Activated T-helper 1 cell treated with anti-CD3 and anti-CD28 coated beads, Interleukin-12 subunit alpha, Interleukin-12 subunit beta, Interleukin-2, Interleukin-4 antibody, amounts not matched to agents 30 ng/mL and 10 ng/mL and 1 ng/mL, durations not matched to agents 14 hours and 24 hours and 36 hours (primary cell): ENCODE measurements at regions of chr16 and their contacts with region 1.

Region 1: GRCh38 chr16:11586856-11587642 is at the start of gene LITAF:
- DNase-seq: peak; percentile 45
- H3K4me3 Mint-ChIP-seq: peak within 1 kb of the TSS; percentile 93
- H3K27ac Mint-ChIP-seq: peak within 1 kb of the TSS; percentile 92
- H3K4me1 Mint-ChIP-seq: peaks cover 38% of the 10 kb centered on the region
- H3K27me3 Mint-ChIP-seq: no peaks in the 10 kb centered on the region
- total RNA-seq, gene LITAF: 197 and 199 TPM in 2 replicates

Region 2: DNA sequence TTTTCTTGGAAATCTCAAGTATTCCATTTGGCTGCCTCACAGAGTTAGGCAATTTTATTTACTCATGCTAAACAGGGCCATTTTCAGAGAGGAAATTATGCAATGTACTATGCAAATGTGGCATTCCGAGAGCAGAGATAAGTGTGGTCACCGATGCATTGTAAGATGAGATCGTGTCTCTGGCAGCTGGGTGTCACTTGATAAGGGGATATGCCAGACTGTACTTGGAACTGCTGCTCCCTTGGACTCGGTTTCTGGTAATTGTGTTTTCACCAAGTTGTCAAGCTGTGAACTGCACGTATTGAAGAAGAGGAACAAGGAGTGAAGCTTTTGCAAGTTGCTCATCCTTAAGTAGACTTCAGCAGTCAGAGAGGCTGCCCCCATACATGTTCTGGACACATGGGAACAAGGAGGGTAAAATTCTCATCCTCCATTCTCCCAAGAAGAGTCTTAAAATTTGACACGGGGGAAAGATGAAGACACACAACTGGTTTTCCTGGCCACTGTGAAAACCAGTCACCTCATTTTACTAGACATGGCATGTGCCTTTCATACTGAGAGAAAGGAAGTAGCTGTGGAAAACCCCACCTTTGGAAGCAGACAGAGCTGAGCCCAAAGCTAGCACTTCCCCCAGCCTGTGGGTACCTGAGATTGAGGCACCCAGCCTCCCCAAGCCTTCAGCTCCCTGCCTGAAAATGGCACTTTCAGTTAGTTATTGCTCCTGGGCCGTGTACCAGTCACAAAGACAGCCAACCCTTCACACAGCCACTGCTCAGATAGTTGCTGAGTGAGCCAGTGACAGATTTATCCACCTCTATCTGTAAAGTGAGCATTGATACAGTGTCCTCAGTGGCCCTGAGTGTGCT is 481.8 kb before region 1 on chr16:
- intact Hi-C with region 1: loop called (anchors 10 kb)
- DNase-seq: peak; percentile 44
- H3K4me3 Mint-ChIP-seq: peak overlapping the region; percentile 65
- H3K27ac Mint-ChIP-seq: peak overlapping the region; percentile 88
- H3K4me1 Mint-ChIP-seq: peaks cover 75% of the 10 kb centered on the region
- H3K27me3 Mint-ChIP-seq: no peaks in the 10 kb centered on the region

Region 3: GRCh38 chr16:11546608-11547061 is 40.4 kb before region 1 on chr16:
- intact Hi-C with region 1: loop called (anchors 5 kb)
- DNase-seq: no peak
- H3K4me3 Mint-ChIP-seq: no peak overlapping the region
- H3K27ac Mint-ChIP-seq: no peak overlapping the region
- H3K4me1 Mint-ChIP-seq: peaks cover 11% of the 10 kb centered on the region
- H3K27me3 Mint-ChIP-seq: no peaks in the 10 kb centered on the region

Region 4: DNA sequence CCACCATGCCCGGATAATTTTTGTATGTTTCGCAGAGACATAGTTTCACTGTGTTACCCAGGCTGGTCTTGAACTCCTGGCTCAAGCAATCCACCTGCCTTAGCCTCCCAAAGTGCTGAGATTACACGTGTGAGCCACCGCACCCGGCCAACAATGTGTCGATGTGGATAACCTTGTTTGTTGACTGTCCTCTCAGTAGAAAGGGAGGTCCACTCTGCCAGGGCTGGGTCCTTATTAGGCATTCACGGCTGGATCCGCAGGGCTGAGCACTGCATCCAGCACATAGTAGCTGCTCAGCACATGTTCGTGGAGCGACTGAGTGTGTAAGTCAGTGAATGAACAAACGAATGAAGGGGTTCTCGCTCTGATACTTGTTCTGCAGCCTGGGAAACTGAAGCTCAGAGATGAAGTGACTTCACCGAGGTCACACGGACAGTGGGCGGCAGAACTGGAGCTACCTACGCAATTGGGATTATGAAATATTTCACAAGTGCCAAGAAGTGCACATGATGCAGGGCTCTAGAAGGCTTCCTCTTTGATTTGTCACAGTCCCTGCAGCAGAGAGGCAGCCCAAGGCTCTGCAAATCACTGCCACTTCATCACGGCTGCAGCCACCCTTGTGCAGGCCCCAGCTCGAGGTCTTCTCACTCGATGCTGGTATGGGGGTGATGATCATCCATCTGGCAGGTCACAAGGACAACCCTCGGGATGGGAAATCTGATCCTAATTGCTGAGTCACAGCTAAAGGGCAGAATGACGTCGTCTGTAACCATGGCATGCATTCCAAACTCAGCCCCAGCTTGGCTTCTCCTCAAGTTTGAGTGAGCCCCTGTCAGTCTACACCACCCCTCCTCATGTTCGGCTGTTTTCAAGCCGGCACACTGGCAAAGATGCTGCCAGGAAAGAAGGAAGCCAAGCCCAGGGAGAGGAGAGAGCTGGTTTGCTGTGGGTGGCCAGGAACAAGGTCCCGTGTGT is 53.2 kb after region 1 on chr16:
- intact Hi-C with region 1: loop called (anchors 2 kb)
- DNase-seq: no peak
- H3K4me3 Mint-ChIP-seq: no peak overlapping the region
- H3K27ac Mint-ChIP-seq: no peak overlapping the region
- H3K4me1 Mint-ChIP-seq: peaks cover 5% of the 10 kb centered on the region
- H3K27me3 Mint-ChIP-seq: peaks cover 11% of the 10 kb centered on the region

Region 5: DNA sequence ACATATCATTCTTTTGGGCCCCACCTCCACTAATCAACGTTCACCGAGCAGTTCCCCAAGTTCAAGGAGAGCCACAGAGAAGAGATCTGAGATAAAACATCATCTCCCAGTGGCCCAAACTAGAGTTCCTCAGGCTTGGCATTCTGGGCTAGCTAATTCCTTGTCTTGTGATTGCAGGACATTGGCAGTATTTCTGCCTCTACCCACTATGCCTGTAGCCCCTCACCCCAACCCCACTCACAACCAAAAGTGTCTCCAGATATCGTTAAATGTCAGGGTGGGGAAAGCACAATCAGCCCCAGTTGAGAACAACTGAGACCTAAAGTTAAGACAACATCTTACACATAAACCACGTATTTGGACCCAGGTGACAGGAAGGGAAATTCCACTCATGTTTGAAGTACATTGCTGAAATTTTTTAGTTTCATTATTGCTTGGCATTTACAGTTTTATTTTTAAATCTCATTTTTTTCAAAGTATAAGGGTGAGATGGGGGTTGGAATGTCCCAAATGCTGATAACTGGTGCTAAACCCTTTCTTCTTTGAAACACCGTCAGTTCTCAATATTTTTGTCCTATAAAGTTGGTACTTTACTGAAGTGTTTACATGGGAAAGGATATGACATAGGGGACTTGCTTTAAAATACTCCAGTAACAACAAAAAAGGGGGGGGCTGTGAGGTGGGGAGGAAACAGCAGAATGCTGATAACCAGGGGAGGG is 196.4 kb after region 1 on chr16:
- intact Hi-C with region 1: loop called (anchors 5 kb)
- DNase-seq: peak; percentile 67
- H3K4me3 Mint-ChIP-seq: peak overlapping the region; percentile 83
- H3K27ac Mint-ChIP-seq: peak overlapping the region; percentile 98
- H3K4me1 Mint-ChIP-seq: peaks cover 64% of the 10 kb centered on the region
- H3K27me3 Mint-ChIP-seq: no peaks in the 10 kb centered on the region